Endothelial cell of umbilical vein (primary cell): ENCODE measurements at regions of chr15 and their contacts with region 1.

Region 1: DNA sequence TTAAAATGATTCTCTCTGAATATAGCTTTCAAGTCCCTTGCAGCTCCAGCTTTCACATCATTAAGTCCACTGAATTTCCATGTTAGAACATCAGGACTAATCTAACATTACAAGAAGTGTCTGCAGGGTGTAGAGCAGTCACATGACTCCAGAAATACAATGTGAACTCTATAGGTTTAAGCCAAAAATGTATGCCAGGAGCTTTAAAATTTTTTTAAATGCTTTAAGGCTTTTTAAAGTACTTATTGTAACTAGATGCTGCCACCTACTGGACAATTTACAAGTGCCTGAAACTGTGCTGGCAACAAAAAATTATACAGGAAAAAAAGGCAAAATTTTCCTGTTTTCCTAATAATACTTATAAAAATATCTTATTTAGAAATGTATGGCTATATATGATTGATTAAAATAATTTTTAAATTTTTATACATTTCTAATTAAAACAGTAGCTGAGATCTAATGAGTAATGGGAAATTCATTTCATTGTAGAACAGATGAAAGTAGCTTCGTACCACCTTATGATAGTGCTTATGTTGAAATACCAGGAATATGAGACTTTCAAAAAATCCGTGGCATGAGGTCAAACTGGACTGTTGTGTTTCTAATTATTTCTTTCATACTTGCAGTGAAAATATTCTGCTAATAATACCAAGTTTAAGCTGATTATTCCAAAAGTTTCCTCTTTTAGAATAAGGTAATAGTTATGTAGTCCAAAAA is 25.7 kb downstream of the FSIP1 start:
- DNase-seq: peak; percentile 74
- H3K4me3 ChIP-seq: no peak overlapping the region
- H3K27ac ChIP-seq: no peak overlapping the region
- H3K4me1 ChIP-seq: no peaks in the 10 kb centered on the region
- H3K27me3 ChIP-seq: no peaks in the 10 kb centered on the region
- CTCF ChIP-seq: peak; percentile 49 to 51
- POLR2A ChIP-seq: no peak

Region 2: DNA sequence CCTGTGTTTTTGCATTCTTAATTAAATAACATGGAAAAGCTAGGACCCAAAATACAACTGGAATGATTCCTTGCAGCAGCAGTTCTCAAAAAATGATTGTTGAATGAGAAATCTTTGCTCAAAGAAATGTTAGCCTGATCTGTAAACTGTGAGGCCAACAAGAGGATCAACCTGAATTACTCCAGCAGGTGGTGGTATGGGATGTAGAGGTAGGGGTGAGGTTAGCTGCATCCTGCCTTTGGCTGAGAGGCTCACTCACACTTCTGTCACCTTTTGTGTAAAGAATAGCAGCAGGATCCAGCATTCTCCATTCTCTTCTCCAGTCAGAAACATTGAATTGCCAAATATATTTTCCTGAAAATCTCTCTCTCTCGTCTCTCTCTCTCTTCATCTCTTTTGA is 1329.6 kb before region 1 on chr15:
- CTCF ChIA-PET with region 1: no interaction called
- POLR2A ChIA-PET with region 1: no interaction called
- dilution Hi-C with region 1: no loop called
- intact Hi-C with region 1: no loop called
- DNase-seq: no peak
- H3K4me3 ChIP-seq: no peak overlapping the region
- H3K27ac ChIP-seq: no peak overlapping the region
- H3K4me1 ChIP-seq: no peaks in the 10 kb centered on the region
- H3K27me3 ChIP-seq: peaks cover 20 to 67% of the 10 kb centered on the region in 2 experiments
- CTCF ChIP-seq: no peak
- POLR2A ChIP-seq: no peak

Region 3: GRCh38 chr15:38563723-38564519 is 1193.0 kb before region 1 on chr15:
- CTCF ChIA-PET with region 1: interaction called, 11 read pairs
- POLR2A ChIA-PET with region 1: no interaction called
- dilution Hi-C with region 1: no loop called
- intact Hi-C with region 1: no loop called
- DNase-seq: peak; percentile 48
- H3K4me3 ChIP-seq: peak overlapping the region; percentile 15 to 61 (median 44)
- H3K27ac ChIP-seq: no peak overlapping the region
- H3K4me1 ChIP-seq: no peaks in the 10 kb centered on the region
- H3K27me3 ChIP-seq: peaks cover 34 to 54% of the 10 kb centered on the region in 2 experiments
- CTCF ChIP-seq: peak; percentile 83 to 95
- POLR2A ChIP-seq: no peak

Region 4: GRCh38 chr15:38817427-38818156 is 939.4 kb before region 1 on chr15:
- CTCF ChIA-PET with region 1: interaction called, 11 read pairs
- POLR2A ChIA-PET with region 1: no interaction called
- dilution Hi-C with region 1: no loop called
- intact Hi-C with region 1: loop called (anchors 5 kb)
- DNase-seq: peak; percentile 86
- H3K4me3 ChIP-seq: no peak overlapping the region
- H3K27ac ChIP-seq: peak overlapping the region; percentile 36
- H3K4me1 ChIP-seq: peaks cover 17% of the 10 kb centered on the region
- H3K27me3 ChIP-seq: no peaks in the 10 kb centered on the region
- CTCF ChIP-seq: peak; percentile 98 to 99
- POLR2A ChIP-seq: no peak

Region 5: DNA sequence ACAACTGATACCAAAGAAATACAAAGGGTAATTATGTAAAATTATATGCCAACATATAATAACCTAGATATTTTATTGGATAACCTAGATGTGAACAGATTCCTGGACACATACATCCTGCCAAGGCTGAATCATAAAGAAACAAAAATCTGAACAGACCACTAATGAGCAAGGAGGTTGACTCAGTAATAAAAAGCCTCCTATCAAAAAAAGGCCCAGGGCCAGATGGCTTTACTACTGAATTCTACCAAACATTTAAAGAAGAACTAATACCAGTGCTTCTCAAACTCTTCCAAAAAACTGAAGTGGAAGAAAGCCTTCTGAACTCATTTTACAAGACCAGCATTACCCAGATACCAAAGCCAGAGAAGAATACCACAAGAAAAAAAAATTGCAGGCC is 143.7 kb before region 1 on chr15:
- CTCF ChIA-PET with region 1: interaction called, 379 read pairs
- POLR2A ChIA-PET with region 1: no interaction called
- dilution Hi-C with region 1: no loop called
- intact Hi-C with region 1: no loop called
- DNase-seq: no peak
- H3K4me3 ChIP-seq: no peak overlapping the region
- H3K27ac ChIP-seq: no peak overlapping the region
- H3K4me1 ChIP-seq: peaks cover 10% of the 10 kb centered on the region
- H3K27me3 ChIP-seq: no peaks in the 10 kb centered on the region
- CTCF ChIP-seq: no peak
- POLR2A ChIP-seq: no peak

Region 6: DNA sequence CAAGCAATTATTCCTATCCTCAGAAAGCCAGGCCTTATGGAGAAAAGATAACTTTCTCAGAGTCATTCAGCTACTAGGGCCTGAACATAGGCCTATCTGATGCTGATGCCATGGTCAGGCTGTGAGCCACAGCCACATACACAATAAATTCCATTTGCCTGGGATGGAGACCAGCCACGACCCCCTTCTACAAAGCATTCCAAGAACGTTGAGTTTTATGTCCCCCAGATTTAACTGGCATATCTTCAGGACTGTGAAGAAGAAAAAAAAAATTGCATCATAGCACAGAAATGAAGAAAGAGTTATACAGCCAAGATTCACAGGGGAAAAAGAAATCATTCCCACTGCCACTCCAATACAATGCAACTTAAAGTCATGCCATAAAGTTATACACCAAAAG is 76.1 kb before region 1 on chr15:
- CTCF ChIA-PET with region 1: interaction called, 240 read pairs
- POLR2A ChIA-PET with region 1: no interaction called
- dilution Hi-C with region 1: no loop called
- intact Hi-C with region 1: loop called (anchors 1 kb)
- DNase-seq: no peak
- H3K4me3 ChIP-seq: no peak overlapping the region
- H3K27ac ChIP-seq: no peak overlapping the region
- H3K4me1 ChIP-seq: no peaks in the 10 kb centered on the region
- H3K27me3 ChIP-seq: no peaks in the 10 kb centered on the region
- CTCF ChIP-seq: no peak
- POLR2A ChIP-seq: no peak

Region 7: GRCh38 chr15:39713846-39714245 is 43.1 kb before region 1 on chr15:
- CTCF ChIA-PET with region 1: interaction called, 16 read pairs
- POLR2A ChIA-PET with region 1: no interaction called
- dilution Hi-C with region 1: no loop called
- intact Hi-C with region 1: no loop called
- DNase-seq: no peak
- H3K4me3 ChIP-seq: no peak overlapping the region
- H3K27ac ChIP-seq: no peak overlapping the region
- H3K4me1 ChIP-seq: no peaks in the 10 kb centered on the region
- H3K27me3 ChIP-seq: no peaks in the 10 kb centered on the region
- CTCF ChIP-seq: no peak
- POLR2A ChIP-seq: no peak

Region 8: DNA sequence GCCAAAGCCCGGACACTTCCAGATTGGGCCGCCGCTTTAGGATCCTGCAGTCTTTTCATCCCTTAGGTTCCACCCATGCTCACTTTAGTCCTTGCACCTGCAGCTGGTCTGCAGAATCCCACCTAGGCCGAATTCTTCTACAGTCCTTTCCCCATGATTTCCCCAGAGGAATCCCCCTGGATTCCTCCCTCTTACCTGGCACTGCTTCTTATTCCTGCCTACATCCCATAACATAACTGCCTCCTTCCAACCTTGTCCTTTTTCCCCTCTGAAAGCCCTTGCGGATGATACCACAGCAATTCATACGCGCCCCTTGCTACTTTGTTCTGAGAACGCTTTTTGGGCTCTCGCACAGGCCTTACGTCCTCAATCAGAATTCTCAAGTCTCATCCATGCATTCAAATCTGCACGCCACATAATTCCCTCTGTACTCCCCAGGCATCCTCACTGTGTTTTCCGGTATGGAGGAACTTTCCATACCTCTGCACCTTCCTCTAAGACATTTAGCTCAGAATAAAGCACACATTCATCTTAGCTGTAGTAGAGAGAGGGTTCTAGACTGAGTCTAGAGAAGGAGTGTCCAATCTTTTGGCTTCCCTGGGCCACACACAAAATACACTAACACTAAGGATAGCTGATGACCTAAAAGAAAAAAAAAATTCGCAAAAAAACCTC is 177.6 kb after region 1 on chr15:
- CTCF ChIA-PET with region 1: interaction called, 12 read pairs
- POLR2A ChIA-PET with region 1: no interaction called
- dilution Hi-C with region 1: no loop called
- intact Hi-C with region 1: no loop called
- DNase-seq: peak; percentile 47
- H3K4me3 ChIP-seq: peak overlapping the region; percentile 33 to 77 (median 57)
- H3K27ac ChIP-seq: peak overlapping the region; percentile 92
- H3K4me1 ChIP-seq: peaks cover 22% of the 10 kb centered on the region
- H3K27me3 ChIP-seq: no peaks in the 10 kb centered on the region
- CTCF ChIP-seq: no peak
- POLR2A ChIP-seq: no peak